Adrenal gland (tissue), 19 donors: ENCODE measurements at regions of chr3 and their contacts with region 1.

Region 1: GRCh38 chr3:17841190-17841828 is 98.9 kb upstream of the TBC1D5 start:
- DNase-seq: peak; percentile 52 to 83 (median 71)
- H3K4me3 ChIP-seq: no peak overlapping the region
- H3K27ac ChIP-seq: no peak overlapping the region
- H3K4me1 ChIP-seq: no peaks in the 10 kb centered on the region
- H3K27me3 ChIP-seq: no peaks in the 10 kb centered on the region
- CTCF ChIP-seq: peak; percentile 73 to 95 (median 93)
- POLR2A ChIP-seq: no peak

Region 2: GRCh38 chr3:17431004-17431403 is 410.3 kb before region 1 on chr3:
- intact Hi-C with region 1: loop called (anchors 5 to 10 kb)
- DNase-seq: no peak
- H3K4me3 ChIP-seq: no peak overlapping the region
- H3K27ac ChIP-seq: no peak overlapping the region
- H3K4me1 ChIP-seq: no peaks in the 10 kb centered on the region
- H3K27me3 ChIP-seq: no peaks in the 10 kb centered on the region
- CTCF ChIP-seq: peak; percentile 31 to 60 (median 54)
- POLR2A ChIP-seq: no peak

Region 3: GRCh38 chr3:17771177-17772017 is 69.9 kb before region 1 on chr3:
- intact Hi-C with region 1: no loop called
- DNase-seq: no peak
- H3K4me3 ChIP-seq: no peak overlapping the region
- H3K27ac ChIP-seq: no peak overlapping the region
- H3K4me1 ChIP-seq: no peaks in the 10 kb centered on the region
- H3K27me3 ChIP-seq: no peaks in the 10 kb centered on the region
- CTCF ChIP-seq: no peak
- POLR2A ChIP-seq: no peak